ENCODE measurements at regions of chr17 and their contacts with region 1.

Region 1: DNA sequence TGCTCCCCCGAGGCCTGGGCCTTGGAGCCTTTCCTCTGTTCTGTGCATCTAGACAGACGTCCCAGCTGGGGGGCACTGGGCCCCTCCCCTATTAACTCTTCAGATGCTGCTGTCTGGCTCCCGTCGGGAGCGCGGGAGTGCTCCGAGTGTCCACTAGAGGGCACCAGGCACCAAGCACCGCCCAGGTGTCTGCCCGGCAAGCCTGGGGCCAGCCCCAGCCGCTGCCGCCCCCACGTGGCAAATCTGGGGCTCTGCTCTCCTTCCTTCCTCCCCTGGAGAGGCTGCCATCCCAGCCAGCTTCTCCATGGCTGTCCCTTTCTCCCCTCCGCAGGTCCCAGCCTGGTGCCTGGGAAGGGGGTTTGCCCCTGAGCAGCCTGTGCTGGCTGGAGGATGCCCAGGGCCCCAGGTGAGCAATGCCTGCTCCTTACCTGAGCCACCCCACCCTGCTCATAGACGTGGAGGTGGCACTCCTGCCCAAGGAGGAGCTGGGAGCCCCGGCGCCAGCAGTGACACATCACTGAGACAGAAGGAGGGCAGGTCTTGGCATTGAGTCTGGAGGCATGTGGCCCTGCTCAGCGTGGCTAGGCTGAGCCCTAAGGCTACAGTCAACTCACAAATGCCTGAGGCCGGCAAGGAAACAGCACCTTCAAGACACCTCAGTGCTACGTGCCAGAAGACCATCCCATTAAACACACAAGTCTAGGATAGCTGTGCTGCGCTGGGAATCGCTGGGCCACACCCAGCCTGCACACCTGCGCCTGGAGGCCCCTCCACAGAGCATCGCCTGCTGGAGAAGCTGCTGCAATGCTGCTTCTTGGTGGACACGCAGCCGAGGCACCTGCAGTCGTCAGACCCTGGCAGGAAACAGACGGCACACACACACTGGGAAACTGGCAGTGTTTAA is 19.7 kb downstream of the TMEM235 start:
- DNase-seq: peak; percentile 63 to 90
- H3K4me3 ChIP-seq: peak overlapping the region; percentile 23; the same call in 1 of the 2 replicates
- H3K27ac ChIP-seq: no peak overlapping the region
- H3K4me1 ChIP-seq: 0 out of 2 replicates have a peak, but pooled peaks cover 6% of the 10 kb centered on the region
- H3K27me3 ChIP-seq: no peaks in the 10 kb centered on the region
- CTCF ChIP-seq: peak; percentile 96

Region 2: DNA sequence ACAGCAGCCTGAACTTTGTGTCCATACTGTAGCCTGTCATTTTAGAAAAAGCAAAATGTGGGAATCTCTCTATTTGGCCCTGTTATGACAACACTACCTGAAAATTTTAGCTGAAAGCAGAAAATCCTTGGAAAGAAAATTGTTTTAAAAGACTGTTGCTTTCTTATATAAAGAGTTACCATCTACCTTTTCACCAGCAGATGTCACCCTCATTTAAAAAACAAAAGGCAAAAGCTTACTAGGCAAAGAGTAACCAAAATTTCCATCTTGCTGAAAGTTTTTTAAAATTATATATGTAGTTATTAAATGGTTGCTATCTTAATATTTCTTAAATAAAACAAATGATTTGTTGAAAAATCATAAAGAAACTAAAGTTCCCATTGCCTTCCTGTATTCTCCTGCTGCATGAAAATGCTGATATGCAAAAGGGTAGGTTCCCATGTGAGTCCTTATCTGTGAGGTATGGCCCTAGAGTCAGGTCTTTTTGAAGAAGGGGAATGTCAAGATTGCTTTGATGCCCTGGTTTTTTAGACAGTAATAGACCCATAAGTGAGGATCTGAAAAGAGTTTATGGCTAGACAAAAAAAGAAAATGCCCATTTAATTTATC is 231.7 kb before region 1 on chr17:
- CTCF ChIA-PET with region 1: interaction called, 4 read pairs
- POLR2A ChIA-PET with region 1: no interaction called
- intact Hi-C with region 1: loop called (anchors 5 kb)
- DNase-seq: no peak
- H3K4me3 ChIP-seq: no peak overlapping the region
- H3K27ac ChIP-seq: no peak overlapping the region
- H3K4me1 ChIP-seq: no peaks in the 10 kb centered on the region
- H3K27me3 ChIP-seq: peaks cover 64% of the 10 kb centered on the region
- CTCF ChIP-seq: peak; percentile 62

Region 3: GRCh38 chr17:78112518-78113226 is 138.5 kb before region 1 on chr17:
- CTCF ChIA-PET with region 1: interaction called, 4 read pairs
- POLR2A ChIA-PET with region 1: interaction called, 5 read pairs
- intact Hi-C with region 1: loop called (anchors 1 kb)
- DNase-seq: peak in 1 of 2 experiments; percentile 84
- H3K4me3 ChIP-seq: no peak overlapping the region
- H3K27ac ChIP-seq: no peak overlapping the region
- H3K4me1 ChIP-seq: no peaks in the 10 kb centered on the region
- H3K27me3 ChIP-seq: no peaks in the 10 kb centered on the region
- CTCF ChIP-seq: peak; percentile 92

Region 4: DNA sequence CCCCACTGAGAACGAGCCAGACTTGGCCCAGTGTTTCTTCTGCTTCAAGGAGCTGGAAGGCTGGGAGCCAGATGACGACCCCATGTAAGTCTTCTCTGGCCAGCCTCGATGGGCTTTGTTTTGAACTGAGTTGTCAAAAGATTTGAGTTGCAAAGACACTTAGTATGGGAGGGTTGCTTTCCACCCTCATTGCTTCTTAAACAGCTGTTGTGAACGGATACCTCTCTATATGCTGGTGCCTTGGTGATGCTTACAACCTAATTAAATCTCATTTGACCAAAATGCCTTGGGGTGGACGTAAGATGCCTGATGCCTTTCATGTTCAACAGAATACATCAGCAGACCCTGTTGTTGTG is 36.5 kb before region 1 on chr17:
- CTCF ChIA-PET with region 1: interaction called, 13 read pairs
- POLR2A ChIA-PET with region 1: no interaction called
- intact Hi-C with region 1: no loop called
- DNase-seq: no peak
- H3K4me3 ChIP-seq: peak overlapping the region; percentile 72
- H3K27ac ChIP-seq: no peak overlapping the region
- H3K4me1 ChIP-seq: peaks cover 9% of the 10 kb centered on the region; the same call in 1 of the 2 replicates
- H3K27me3 ChIP-seq: no peaks in the 10 kb centered on the region
- CTCF ChIP-seq: no peak

Region 5: DNA sequence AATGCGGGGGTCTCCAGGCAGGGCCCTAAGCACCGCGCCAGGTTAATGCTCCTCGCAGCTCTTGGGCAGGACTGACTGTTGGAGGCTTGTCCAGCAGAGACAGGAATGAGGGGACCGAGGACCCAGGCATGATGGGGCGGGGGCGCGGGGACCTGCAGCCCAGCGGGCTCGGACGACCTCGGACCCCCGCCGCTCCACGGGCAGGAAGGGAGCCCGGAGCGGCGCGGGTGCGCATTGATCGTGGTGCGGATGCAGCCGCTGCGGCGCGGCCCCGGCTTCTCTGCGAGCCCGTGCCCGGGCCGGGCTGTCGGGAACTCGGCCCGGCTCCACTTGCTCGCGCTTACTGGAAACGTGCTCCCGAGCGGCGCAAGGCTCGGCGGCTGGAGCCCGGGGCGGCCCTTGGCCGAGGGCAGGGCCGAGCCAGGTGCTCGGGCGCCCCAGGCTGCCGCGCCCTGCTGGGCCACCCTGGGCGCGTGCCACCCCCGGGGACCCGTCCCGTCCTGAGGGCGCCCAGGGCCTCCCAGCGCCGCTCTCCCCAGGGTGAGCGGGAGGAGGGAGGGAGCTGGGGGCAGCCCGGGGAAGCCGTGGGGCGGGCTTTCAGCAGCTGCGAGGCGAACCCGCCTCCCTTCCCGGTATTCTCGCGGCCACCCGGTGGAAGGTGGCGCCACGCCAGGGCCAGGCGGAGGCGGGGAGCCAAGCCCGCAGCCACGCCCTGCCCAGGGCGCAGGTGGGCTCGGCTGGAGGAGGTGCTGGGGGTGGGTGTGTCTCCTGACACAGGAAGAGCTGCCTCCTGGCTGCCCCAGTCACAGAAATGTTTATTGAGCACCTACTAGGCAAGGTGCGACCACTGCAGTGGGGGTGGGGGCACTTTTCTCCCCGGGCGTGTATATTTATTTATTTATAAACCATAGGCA is 62.8 kb after region 1 on chr17:
- CTCF ChIA-PET with region 1: interaction called, 3 read pairs
- POLR2A ChIA-PET with region 1: no interaction called
- intact Hi-C with region 1: loop called (anchors 2 kb)
- DNase-seq: peak; percentile 75 to 98
- H3K4me3 ChIP-seq: peak overlapping the region; percentile 51; the same call in 1 of the 2 replicates
- H3K27ac ChIP-seq: peak overlapping the region; percentile 95
- H3K4me1 ChIP-seq: peaks cover 41% of the 10 kb centered on the region
- H3K27me3 ChIP-seq: no peaks in the 10 kb centered on the region
- CTCF ChIP-seq: no peak

Region 6: DNA sequence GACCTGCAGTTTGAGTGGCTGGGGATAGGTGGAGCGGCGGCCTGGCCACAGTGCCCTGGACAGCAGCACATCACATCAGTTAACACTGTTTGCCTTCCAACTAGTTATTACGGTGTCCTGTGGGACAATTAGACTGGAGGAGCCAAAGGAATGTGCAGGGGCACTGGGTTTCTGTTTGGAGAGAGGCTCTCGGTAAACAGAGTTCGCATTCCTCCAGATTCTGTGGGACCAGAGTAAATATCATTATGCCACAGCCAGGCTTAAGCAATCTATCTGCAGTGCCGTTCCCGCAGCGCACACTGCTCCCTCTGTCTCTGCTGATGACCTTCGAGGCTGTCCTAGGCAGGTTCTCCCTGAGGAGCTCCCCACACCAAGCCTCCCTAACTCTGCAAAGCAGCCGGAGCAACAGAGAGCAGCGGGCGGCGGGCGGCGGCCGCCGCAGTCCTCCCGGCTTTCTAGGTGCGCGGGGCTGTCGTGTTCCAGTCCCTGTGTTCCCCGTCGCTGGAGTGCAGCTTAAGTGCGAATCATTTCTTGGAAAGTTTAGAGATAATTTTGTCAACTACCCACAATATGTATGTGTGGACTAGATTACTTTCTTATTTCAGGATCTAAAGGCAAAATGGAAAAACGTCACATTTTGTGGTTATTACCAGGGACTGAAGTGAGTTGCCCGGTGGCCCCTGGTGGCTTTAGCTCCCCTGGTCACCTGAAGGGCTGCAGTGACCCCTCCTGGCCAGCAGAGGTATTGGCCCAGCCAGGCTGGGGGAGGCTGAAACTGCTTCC is 170.5 kb after region 1 on chr17:
- CTCF ChIA-PET with region 1: interaction called, 11 read pairs
- POLR2A ChIA-PET with region 1: no interaction called
- intact Hi-C with region 1: loop called (anchors 1 kb)
- DNase-seq: peak; percentile 47 to 77
- H3K4me3 ChIP-seq: no peak overlapping the region
- H3K27ac ChIP-seq: no peak overlapping the region
- H3K4me1 ChIP-seq: no peaks in the 10 kb centered on the region
- H3K27me3 ChIP-seq: no peaks in the 10 kb centered on the region
- CTCF ChIP-seq: peak; percentile 87